AG04449 (cell line): ENCODE measurements at regions of chr10 and their contacts with region 1.

Region 1: GRCh38 chr10:97731346-97732051 is 5.4 kb upstream of the ZFYVE27 start:
- DNase-seq: no peak
- H3K4me3 ChIP-seq: no peak overlapping the region
- CTCF ChIP-seq: peak; percentile 84

Region 2: DNA sequence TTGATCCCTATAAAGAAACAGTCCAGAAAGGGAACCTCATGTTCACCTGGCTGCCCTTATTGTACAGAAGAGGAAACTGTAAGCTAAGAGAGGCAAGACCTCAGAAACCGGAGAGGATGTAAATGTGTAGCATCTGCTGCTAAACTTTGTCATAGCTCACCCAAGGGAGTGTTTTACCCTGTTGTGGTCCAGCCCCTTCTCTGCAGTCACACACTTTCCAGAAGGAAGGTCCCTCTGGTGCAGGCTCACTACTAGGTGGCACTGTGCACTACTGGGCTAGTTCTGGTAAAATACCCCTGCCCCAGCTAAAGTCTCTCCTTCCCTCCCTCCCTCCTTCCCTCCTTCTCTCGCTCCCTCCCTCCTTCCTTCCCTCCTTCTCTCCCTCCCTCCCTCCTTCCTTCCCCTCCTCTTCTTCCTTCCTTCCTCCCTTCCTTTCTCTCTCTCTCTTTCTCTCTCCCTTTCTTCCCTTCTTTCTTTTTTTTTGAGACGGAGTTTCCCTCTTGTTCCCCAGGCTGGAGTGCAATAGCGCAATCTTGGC is 941.9 kb before region 1 on chr10:
- CTCF ChIA-PET with region 1: no interaction called
- POLR2A ChIA-PET with region 1: no interaction called
- DNase-seq: no peak
- H3K4me3 ChIP-seq: no peak overlapping the region
- CTCF ChIP-seq: peak; percentile 77

Region 3: DNA sequence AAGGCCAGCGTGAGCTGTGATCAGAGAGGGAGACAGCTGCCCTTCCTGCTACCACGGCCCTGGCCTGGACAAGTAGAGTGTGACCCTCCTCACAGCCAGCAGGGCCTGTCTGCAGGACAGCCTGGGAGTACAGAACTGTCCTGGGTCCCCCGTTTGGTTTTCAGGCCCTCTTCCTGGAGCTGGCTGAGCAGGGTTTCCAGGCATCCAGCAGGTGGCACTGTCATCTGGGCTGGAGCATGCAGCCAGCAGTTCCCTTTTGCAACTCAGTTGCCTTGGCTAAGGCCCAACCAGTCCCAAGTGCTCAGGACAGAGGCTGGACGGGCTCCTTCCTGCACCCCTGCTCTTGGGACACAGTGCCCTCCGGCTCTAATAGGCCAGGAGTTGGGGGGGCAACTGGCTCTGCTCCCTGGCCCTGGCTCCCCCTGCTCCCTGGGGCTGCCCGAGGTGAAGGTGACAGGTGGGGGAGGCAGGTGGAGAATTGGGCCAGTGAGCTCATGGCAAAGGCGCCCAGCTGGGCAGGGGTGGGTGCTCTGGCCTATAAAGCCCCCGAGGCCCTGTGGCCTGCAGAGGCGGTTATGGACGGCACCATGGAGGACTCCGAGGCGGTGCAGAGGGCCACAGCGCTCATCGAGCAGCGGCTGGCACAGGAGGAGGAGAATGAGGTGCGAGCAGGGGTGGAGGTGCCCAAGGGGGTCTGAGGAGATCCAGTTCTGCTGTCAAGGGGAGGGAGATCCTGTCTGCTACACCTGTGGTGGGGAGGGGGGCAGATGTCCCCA is 159.1 kb before region 1 on chr10 and contains the start of gene ANKRD2:
- CTCF ChIA-PET with region 1: interaction called, 45 read pairs
- POLR2A ChIA-PET with region 1: no interaction called
- DNase-seq: no peak
- H3K4me3 ChIP-seq: no peak within 1 kb of the TSS
- CTCF ChIP-seq: peak; percentile 93

Region 4: GRCh38 chr10:97686962-97687784 is 44.3 kb before region 1 on chr10 and contains the start of gene AVPI1:
- CTCF ChIA-PET with region 1: interaction called, 328 read pairs
- POLR2A ChIA-PET with region 1: interaction called, 11 read pairs
- DNase-seq: peak; percentile 82
- H3K4me3 ChIP-seq: peak within 1 kb of the TSS; percentile 82
- CTCF ChIP-seq: no peak

Region 5: GRCh38 chr10:97701438-97702069 is 29.9 kb before region 1 on chr10:
- CTCF ChIA-PET with region 1: interaction called, 664 read pairs
- POLR2A ChIA-PET with region 1: interaction called, 4 read pairs
- DNase-seq: no peak
- H3K4me3 ChIP-seq: no peak overlapping the region
- CTCF ChIP-seq: peak; percentile 86

Region 6: DNA sequence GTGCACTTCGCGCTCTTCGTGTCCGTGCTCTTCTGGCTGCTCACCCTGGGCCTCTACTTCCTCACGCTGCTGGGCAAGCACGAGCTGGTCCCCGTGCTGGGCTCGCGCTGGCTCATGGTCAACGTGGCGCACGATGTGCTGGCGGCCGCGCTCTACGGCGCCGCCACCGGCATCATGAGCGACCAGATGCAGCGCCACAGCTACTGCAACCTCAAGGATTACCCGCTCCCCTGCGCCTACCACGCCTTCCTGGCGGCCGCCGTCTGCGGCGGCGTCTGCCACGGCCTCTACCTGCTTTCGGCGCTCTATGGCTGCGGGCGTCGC is 17.5 kb before region 1 on chr10:
- CTCF ChIA-PET with region 1: interaction called, 664 read pairs
- POLR2A ChIA-PET with region 1: interaction called, 39 read pairs
- DNase-seq: no peak
- H3K4me3 ChIP-seq: peak overlapping the region; percentile 69
- CTCF ChIP-seq: peak; percentile 33

Region 7: DNA sequence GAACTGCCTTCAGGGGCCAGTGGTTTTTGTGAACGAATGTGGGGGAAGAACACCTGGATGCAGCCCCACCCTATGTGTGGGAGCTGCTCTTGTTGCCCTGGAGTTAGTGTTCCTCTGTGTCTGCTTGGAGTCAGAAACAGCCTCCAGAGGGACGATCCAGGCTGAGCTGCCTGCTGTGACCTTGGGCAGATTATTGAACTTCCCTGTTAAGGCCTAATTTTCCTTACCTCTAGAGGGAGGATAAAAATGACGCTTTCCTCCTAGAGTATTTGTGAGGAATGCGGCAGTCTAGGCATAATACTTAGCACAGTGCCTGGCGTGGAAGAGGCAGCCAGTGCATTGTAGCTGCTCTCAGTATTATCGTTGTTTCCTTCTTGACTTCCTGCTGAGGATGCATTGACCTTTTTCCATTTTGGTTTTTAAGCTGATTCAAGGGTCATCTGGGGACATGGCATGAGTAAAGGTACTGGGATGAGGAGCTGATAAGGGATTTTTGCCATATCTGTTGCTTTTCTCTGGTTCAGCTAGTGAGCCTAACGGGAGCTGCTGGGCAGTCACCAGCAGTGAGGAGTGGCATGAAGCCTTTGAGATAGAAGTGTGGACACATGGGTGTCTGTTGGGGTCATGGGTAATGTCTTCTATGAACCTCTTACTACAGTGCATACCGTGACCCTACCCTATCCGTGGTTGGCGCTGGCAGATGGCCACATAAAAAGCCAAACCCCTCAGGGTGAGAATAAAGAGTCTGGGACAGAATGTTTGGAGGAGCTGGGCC is 11.9 kb after region 1 on chr10:
- CTCF ChIA-PET with region 1: interaction called, 23 read pairs
- POLR2A ChIA-PET with region 1: interaction called, 4 read pairs
- DNase-seq: no peak
- H3K4me3 ChIP-seq: no peak overlapping the region
- CTCF ChIP-seq: no peak